RWPE1 (cell line): ENCODE measurements at regions of chr9 and their contacts with region 1.

Region 1: DNA sequence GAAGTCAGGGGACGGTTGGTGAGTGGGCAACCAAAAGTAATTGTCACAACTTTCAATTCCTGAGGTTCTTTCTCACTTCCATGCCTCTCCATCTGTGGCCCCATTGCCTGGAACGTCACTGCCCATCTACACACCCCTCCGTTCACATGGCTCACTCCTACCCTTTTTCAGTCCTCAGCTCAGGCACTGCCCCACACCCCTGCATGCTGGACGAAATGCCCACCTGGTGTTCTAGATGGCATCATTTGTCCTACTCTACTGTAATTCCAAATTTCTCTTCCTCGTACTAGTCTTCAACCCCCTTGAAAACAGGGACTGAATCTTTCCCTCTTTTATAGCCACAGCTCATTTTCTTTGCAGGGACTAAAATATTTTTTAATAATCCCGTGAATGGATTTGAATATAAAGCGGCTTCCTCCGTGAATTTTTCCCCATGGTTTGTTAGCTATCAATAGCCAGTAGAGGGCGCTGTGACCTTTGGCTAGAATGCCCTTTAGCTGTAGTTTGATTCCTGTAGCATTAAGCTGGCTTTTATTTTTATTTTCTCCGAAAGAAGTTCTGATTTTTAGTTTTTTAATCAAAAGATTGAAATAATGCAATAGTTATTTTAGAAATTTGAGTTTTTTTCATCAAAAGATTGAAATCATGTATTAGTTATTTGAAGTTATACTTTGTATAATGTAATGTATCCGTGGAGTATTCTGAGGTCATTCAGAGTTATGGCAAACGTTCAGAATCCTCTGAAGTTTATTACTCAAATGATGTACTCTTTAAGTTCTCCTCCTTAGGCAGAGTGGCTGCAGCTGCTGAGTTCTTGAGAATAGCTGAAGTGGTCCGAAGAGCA is 232.1 kb downstream of the SH3GL2 start:
- DNase-seq: peak; percentile 47
- H3K27ac ChIP-seq: no peak overlapping the region
- CTCF ChIP-seq: peak; percentile 98

Region 2: DNA sequence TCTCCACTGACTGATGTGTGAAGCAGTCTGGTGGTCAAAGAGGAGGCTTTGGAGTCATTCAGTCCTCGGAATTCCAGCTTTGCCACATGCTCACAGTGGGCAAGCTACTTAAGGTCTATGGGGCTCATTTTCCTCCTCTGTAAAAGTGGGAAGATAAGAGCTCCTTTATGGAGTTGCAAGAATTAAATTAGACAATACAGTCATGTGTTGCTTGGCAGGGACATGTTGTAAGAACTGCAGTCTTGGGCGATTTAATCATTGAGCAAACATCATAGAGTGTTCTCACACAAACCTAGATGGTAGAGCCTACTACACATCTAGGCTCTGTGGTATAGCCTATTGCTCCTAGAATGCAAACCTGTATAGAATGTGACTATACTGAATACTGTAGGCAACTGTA is 21.9 kb after region 1 on chr9:
- CTCF ChIA-PET with region 1: interaction called, 11 read pairs
- POLR2A ChIA-PET with region 1: no interaction called
- DNase-seq: no peak
- H3K27ac ChIP-seq: no peak overlapping the region
- CTCF ChIP-seq: no peak